Activated CD4-positive, alpha-beta memory T cell treated with anti-CD3 and anti-CD28 coated beads for 36 hours (primary cell): ENCODE measurements at regions of chr12 and their contacts with region 1.

Region 1: GRCh38 chr12:122399592-122400373 is 22.7 kb downstream of the CLIP1 start:
- DNase-seq: peak; percentile 67
- H3K4me3 Mint-ChIP-seq: peak overlapping the region; percentile 27
- H3K27ac Mint-ChIP-seq: peak overlapping the region; percentile 77
- H3K4me1 Mint-ChIP-seq: peaks cover 48% of the 10 kb centered on the region
- H3K27me3 Mint-ChIP-seq: no peaks in the 10 kb centered on the region

Region 2: DNA sequence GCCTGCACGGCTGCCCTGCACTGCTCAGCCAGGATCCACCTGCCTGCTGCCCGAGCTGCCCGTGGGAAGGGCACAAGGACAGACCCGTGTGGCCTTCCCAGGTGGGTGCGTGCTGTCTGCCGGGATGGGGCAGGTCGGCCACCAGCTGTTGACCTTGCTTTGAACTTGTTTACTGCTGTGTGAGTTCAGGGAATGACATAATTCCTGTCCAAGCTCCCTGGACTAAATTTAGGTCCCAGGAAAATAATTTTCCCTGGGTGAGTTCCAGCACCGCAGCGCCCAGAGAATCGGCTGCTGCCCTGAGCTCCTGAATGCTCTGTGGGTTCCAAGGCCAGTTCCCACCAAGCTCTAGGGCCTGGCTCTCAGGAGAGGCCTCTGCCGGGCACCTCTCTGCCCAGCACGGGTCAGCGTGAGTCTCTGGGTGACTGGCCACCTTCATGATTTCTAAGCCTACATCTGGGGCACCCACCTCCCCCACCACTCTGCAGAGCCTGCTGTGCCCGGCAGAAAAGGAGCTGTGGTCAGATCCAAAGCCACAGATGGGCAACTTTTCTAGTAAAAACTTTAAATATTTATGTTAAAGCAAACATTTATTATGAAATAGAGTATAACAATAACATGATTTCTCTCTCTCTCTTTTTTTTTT is 348.4 kb before region 1 on chr12:
- CTCF ChIA-PET with region 1: no interaction called
- POLR2A ChIA-PET with region 1: no interaction called
- intact Hi-C with region 1: no loop called
- DNase-seq: no peak
- H3K4me3 Mint-ChIP-seq: no peak overlapping the region
- H3K27ac Mint-ChIP-seq: no peak overlapping the region
- H3K4me1 Mint-ChIP-seq: peaks cover 4% of the 10 kb centered on the region
- H3K27me3 Mint-ChIP-seq: no peaks in the 10 kb centered on the region

Region 3: DNA sequence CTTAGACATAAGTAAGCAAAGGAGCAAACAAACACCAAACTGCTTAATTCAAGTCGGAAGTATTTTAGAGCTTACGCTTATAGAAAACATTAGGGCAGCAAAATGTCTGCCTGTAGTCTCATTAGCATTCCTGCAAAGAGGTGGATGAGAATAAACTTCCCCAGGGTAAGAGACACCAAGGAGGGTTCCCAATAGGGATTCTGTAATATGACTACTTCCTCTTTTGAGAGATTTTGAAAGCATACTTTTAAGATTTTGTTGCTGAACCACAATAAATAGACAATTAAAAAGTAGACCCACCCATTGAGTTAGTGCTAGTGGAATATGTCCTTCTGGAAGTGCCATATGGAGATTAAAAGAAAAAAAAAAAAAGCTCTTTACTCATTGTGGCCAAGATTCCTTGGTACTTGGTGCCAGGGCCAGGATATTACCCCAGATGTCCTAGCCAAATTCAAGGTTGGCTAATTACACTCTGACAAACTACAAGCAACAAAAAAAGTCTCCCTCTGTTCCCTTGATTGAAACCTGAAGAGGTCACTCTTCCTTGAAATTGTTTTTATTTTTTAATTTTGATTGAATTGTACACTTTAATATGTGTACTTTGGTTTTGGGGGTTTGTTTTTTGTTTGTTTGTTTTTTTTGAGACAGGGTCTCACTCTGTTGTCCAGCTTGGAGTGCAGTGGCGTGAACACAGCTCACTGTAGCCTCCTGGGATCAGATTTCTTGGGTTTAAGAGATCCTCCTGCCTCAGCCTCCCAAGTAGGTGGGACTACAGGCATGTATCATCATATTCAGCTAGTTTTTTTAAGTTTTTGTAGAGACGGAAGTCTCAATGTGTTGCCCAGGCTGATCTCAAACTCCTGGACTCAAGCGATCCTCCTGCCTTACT is 14.0 kb after region 1 on chr12:
- CTCF ChIA-PET with region 1: interaction called, 46 read pairs
- POLR2A ChIA-PET with region 1: interaction called, 8 read pairs
- intact Hi-C with region 1: loop called (anchors 1 kb)
- DNase-seq: no peak
- H3K4me3 Mint-ChIP-seq: peak overlapping the region; percentile 71
- H3K27ac Mint-ChIP-seq: peak overlapping the region; percentile 96
- H3K4me1 Mint-ChIP-seq: peaks cover 56% of the 10 kb centered on the region
- H3K27me3 Mint-ChIP-seq: no peaks in the 10 kb centered on the region

Region 4: GRCh38 chr12:122427412-122427811 is 27.6 kb after region 1 on chr12:
- CTCF ChIA-PET with region 1: interaction called, 33 read pairs
- POLR2A ChIA-PET with region 1: interaction called, 11 read pairs
- intact Hi-C with region 1: no loop called
- DNase-seq: no peak
- H3K4me3 Mint-ChIP-seq: no peak overlapping the region
- H3K27ac Mint-ChIP-seq: no peak overlapping the region
- H3K4me1 Mint-ChIP-seq: peaks cover 12% of the 10 kb centered on the region
- H3K27me3 Mint-ChIP-seq: no peaks in the 10 kb centered on the region

Region 5: GRCh38 chr12:122471324-122472226 is 71.8 kb after region 1 on chr12:
- CTCF ChIA-PET with region 1: interaction called, 208 read pairs
- POLR2A ChIA-PET with region 1: interaction called, 8 read pairs
- intact Hi-C with region 1: loop called (anchors 1 kb)
- DNase-seq: peak; percentile 9
- H3K4me3 Mint-ChIP-seq: no peak overlapping the region
- H3K27ac Mint-ChIP-seq: no peak overlapping the region
- H3K4me1 Mint-ChIP-seq: peaks cover 24% of the 10 kb centered on the region
- H3K27me3 Mint-ChIP-seq: no peaks in the 10 kb centered on the region

Region 6: DNA sequence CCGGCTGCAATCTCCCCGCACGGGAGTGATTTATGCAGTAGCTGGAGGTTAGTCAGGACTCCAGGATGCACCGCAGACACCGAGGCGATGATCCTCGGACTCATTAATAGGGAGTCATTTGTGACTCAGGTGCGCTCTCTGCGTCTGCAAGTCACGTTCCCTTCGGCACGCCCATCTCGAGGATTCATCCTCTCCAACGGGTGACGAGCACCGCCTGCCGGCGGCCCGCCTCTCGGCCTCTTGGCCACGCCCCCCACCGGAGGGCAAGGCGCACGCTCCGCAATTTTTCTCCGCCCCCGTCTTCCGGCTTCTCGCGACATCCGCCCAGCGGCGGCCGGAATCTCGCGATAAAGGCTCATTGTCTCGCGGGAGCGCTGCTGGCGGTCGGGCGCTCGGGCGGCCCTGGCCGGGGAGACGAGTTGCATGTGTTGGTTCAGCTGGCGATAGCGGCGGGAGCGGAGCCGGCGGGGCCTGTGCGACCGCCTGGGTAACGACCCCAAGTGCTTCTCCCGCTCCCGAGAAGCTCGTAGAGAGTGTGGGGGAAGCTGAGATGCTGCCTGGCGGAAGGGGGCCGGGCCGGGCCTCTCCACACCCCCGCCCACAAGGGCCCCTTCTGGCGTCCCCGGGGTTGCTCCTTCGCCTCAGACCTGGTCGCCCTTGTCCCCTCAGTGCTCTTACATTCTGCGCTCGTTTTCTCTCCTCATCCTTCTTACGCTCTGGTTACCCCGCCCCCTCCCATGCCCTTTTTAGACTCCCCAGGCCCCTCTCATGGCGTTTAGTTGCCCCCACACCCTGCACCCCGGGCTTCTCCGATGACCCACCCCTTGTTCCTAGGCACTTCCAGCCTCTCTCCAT is 352.9 kb after region 1 on chr12 and contains the start of gene DENR:
- CTCF ChIA-PET with region 1: no interaction called
- POLR2A ChIA-PET with region 1: no interaction called
- intact Hi-C with region 1: loop called (anchors 1 kb)
- DNase-seq: peak; percentile 100
- H3K4me3 Mint-ChIP-seq: peak within 1 kb of the TSS; percentile 94
- H3K27ac Mint-ChIP-seq: peak within 1 kb of the TSS; percentile 86
- H3K4me1 Mint-ChIP-seq: peaks cover 44% of the 10 kb centered on the region
- H3K27me3 Mint-ChIP-seq: no peaks in the 10 kb centered on the region
- total RNA-seq, gene DENR: 56.9 to 58.2 TPM

Region 7: DNA sequence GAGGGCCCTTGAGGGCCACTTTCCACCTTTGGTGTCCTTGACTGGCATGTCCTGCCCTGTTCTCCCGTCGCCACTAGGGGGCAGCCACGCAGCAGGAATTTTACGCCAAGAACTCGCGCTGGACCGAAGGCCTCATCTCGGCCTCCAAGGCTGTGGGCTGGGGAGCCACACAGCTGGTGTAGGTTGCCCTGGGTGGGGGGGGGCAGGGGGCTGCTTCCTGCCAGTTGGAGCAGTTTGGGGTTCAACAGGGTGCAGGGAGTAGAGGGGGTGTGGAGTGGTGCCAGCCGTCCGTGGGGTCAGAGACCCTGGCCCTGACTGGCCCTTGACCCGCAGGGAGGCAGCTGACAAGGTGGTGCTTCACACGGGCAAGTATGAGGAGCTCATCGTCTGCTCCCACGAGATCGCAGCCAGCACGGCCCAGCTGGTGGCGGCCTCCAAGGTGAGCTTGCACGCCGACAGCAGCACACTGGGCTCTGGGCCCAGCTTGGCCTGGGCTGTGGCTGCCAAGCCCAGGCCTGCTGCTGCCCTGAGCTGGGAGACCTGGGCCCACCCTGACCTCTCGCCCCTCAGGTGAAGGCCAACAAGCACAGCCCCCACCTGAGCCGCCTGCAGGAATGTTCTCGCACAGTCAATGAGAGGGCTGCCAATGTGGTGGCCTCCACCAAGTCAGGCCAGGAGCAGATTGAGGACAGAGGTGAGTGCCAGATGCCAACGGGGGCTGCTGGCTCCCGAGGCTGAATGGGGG is 460.7 kb after region 1 on chr12:
- CTCF ChIA-PET with region 1: no interaction called
- POLR2A ChIA-PET with region 1: no interaction called
- intact Hi-C with region 1: no loop called
- DNase-seq: peak; percentile 88
- H3K4me3 Mint-ChIP-seq: no peak overlapping the region
- H3K27ac Mint-ChIP-seq: no peak overlapping the region
- H3K4me1 Mint-ChIP-seq: no peaks in the 10 kb centered on the region
- H3K27me3 Mint-ChIP-seq: no peaks in the 10 kb centered on the region